Thyroid gland (tissue), 4 donors: ENCODE measurements at regions of chr13 and their contacts with region 1.

Region 1: DNA sequence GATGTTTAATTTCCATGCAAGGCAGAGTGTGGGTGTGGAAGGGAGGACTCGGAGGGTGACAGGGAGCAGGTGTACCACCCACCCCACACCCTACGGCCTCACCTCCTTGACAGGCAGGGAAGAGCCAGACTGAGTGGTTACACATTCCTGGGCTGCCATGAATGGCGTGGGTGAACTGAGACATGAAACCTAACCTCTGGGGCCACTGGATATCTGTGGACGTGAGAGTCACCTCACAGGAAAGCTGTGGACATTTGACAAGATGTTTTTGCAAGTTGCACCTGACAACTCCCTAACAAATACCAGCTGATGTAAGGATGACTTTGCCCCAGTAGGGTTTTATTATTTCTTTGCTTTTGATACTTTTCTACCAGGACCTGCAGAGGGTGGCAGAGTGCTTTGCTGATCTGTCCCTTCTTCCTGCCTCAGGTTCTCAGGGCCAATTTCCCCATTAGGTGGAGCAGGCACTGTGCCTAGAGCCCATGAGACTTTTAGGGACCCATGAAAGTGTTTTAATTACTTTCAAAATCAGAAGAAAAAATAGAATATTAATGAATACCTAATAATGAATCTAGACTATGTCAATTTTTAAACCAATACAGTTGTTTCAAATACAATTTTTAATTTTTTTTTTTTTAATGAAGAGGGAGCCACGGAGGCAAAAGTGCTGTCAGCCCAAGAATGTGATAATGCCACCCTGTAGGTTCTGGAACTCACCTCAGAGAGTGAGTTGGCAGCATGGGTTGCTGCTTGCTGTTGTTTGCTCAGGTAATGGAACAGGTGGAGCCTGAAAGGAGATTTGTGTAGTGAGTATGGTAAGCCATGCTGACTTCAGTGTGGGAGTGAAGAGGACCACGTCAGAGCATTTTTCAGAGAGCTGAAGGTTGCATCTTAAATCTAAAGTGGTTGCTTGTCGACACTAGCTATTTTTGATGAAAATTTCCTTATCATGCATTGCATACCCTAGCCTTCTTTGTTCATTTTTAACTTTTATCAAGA is 58.0 kb upstream of the CYSLTR2 start:
- DNase-seq: peak; percentile 61 to 67
- H3K4me3 ChIP-seq: no peak overlapping the region
- H3K27ac ChIP-seq: peak overlapping the region in 1 of 3 donors; percentile 23
- H3K4me1 ChIP-seq: no peaks in the 10 kb centered on the region
- H3K27me3 ChIP-seq: no peaks in the 10 kb centered on the region
- CTCF ChIP-seq: peak in 5 of 6 experiments; percentile 25 to 78 (median 62)
- POLR2A ChIP-seq: no peak

Region 2: GRCh38 chr13:48018625-48019024 is 577.1 kb before region 1 on chr13:
- intact Hi-C with region 1: no loop called
- DNase-seq: no peak
- H3K4me3 ChIP-seq: no peak overlapping the region
- H3K27ac ChIP-seq: no peak overlapping the region
- H3K4me1 ChIP-seq: no peaks in the 10 kb centered on the region
- H3K27me3 ChIP-seq: no peaks in the 10 kb centered on the region
- CTCF ChIP-seq: no peak
- POLR2A ChIP-seq: no peak

Region 3: GRCh38 chr13:48731957-48732569 is 136.3 kb after region 1 on chr13:
- intact Hi-C with region 1: loop called (anchors 10 kb)
- DNase-seq: peak; percentile 40 to 49
- H3K4me3 ChIP-seq: no peak overlapping the region
- H3K27ac ChIP-seq: no peak overlapping the region
- H3K4me1 ChIP-seq: no peaks in the 10 kb centered on the region
- H3K27me3 ChIP-seq: no peaks in the 10 kb centered on the region
- CTCF ChIP-seq: peak; percentile 36 to 76 (median 58)
- POLR2A ChIP-seq: no peak

Region 4: GRCh38 chr13:48761256-48761655 is 165.5 kb after region 1 on chr13:
- intact Hi-C with region 1: loop called (anchors 5 kb)
- DNase-seq: no peak
- H3K4me3 ChIP-seq: no peak overlapping the region
- H3K27ac ChIP-seq: no peak overlapping the region
- H3K4me1 ChIP-seq: no peaks in the 10 kb centered on the region
- H3K27me3 ChIP-seq: no peaks in the 10 kb centered on the region
- CTCF ChIP-seq: no peak
- POLR2A ChIP-seq: no peak